Ovary (tissue), 10 donors: ENCODE measurements at regions of chr1 and their contacts with region 1.

Region 1: DNA sequence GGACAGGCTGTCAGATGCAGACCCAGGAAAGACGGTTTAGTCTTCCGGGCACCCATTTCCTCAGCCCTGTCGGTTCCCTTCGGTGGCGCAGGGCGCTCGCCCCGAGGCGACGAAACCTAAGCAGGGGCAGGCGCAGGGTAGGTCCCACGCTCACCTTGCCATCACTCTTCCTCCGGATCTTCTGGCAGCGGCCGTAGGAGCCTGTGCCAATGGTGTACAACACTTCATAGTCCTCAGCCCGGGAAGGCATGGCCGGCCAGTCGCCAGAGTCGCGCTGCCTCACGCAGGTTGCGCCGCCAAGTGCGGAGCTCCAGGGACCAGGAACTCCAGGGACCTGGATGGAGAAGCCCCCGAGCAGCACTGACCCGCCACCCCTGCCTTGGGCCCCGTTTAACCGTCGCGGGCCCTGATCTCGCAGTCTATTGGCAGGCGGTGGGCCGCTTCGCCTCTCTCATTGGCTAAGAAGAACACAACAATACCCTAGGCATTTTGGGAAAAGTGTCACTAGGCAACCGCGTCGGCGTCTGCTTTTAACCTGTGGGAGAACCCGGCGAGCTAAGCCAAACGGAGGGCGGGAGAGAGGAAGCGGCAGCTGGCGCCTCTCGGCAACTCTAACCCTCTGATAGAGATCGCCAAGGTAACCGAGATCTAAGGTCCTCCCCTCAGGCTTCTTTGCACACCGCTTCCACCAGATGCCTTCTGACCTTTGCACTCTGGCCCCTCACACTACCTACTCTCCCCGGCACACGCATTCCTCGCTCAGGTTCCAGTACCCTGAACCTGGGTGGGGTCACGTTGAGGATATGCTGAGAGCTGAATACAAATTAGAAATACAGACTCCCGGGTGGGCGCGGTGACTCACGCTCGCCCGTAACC is at the start of gene NEK2:
- DNase-seq: peak; percentile 84 to 92 (median 88)
- H3K4me3 ChIP-seq: peak within 1 kb of the TSS; percentile 53
- H3K27ac ChIP-seq: no peak within 1 kb of the TSS
- H3K4me1 ChIP-seq: peaks cover 3% of the 10 kb centered on the region
- H3K27me3 ChIP-seq: no peaks in the 10 kb centered on the region
- CTCF ChIP-seq: no peak
- EP300 ChIP-seq: no peak
- POLR2A ChIP-seq: no peak
- total RNA-seq, gene NEK2: 0.20 to 1.8 (median 0.40) TPM in 3 of 7 donors, not detected in the others

Region 2: GRCh38 chr1:211742889-211743529 is 67.5 kb after region 1 on chr1:
- intact Hi-C with region 1: no loop called
- DNase-seq: no peak
- H3K4me3 ChIP-seq: no peak overlapping the region
- H3K27ac ChIP-seq: no peak overlapping the region
- H3K4me1 ChIP-seq: no peaks in the 10 kb centered on the region
- H3K27me3 ChIP-seq: no peaks in the 10 kb centered on the region
- CTCF ChIP-seq: no peak
- EP300 ChIP-seq: no peak
- POLR2A ChIP-seq: no peak

Region 3: GRCh38 chr1:212035123-212035834 is 359.8 kb after region 1 on chr1 and contains the starts of genes DTL and INTS7:
- intact Hi-C with region 1: loop called in 1 of 4 experiments (anchors 10 kb)
- DNase-seq: peak; percentile 98 to 99 (median 98)
- H3K4me3 ChIP-seq: peak within 1 kb of the TSS; percentile 57
- H3K27ac ChIP-seq: peak within 1 kb of the TSS; percentile 41 to 60
- H3K4me1 ChIP-seq: peaks cover 2% of the 10 kb centered on the region
- H3K27me3 ChIP-seq: no peaks in the 10 kb centered on the region
- CTCF ChIP-seq: peak; percentile 94 to 100 (median 97)
- EP300 ChIP-seq: no peak
- POLR2A ChIP-seq: peak; percentile 45
- total RNA-seq, gene DTL: 0.11 to 2.0 (median 0.80) TPM
- total RNA-seq, gene INTS7: 5.1 to 19.1 (median 7.0) TPM

Region 4: DNA sequence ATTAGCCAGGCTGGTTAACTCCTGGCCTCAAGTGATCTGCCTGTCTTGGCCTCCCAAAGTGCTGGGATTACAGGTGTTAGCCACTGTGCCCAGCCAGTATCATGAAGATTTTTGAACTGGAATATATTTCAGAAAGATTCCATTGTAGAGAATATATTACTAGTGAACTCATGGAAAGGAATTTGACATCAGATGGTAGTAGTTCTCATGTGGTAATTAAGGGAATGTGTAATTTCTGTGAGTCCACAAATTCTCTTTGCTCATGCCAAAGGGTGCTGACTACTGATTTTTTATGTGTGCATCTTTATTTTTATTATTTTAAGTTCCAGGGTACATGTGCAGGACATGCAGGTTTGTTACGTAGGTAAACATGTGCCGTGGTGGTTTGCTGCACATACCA is 370.5 kb after region 1 on chr1:
- intact Hi-C with region 1: no loop called
- DNase-seq: no peak
- H3K4me3 ChIP-seq: no peak overlapping the region
- H3K27ac ChIP-seq: no peak overlapping the region
- H3K4me1 ChIP-seq: no peaks in the 10 kb centered on the region
- H3K27me3 ChIP-seq: no peaks in the 10 kb centered on the region
- CTCF ChIP-seq: no peak
- EP300 ChIP-seq: no peak
- POLR2A ChIP-seq: no peak